Common myeloid progenitor, CD34-positive (primary cell): ENCODE measurements at regions of chr16 and their contacts with region 1.

Region 1: DNA sequence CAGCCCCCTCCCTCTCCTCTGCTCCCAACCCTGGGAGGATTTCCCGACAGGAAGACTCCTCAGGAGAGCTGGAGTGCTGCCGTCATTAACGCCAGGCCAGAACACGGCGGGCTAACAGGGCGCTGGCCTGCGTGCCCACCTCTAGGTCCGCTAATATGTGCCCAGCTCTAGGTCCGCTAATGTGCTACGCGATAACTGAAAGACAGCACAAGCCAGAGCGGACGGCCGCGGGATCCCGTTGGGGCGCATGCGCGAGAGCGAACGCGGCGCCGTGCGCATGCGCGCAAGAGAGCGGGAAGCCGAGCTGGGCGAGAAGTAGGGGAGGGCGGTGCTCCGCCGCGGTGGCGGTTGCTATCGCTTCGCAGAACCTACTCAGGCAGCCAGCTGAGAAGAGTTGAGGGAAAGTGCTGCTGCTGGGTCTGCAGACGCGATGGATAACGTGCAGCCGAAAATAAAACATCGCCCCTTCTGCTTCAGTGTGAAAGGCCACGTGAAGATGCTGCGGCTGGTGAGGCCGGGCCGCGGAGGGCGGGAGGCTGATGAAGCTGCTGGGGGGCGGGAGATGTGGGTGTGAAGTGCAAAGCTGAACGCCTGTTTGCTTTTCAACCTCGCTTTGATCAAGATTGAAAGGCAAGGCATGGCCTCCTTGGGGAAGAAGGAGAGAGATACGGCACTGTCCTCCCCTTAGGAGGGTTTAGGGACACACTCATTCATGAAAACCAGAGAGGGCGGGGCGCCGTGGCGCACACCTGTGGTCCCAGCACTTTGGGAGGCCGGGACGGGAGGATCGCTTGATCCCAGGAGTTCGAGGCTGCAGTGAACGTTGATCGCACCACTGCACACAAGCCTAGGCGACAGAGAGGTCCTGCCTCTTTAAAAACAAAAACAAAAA is at the start of gene CKLF:
- DNase-seq: peak; percentile 87 to 94 (median 93)
- H3K4me3 ChIP-seq: peak within 1 kb of the TSS; percentile 35 to 85 (median 71)
- H3K27ac ChIP-seq: peak within 1 kb of the TSS; percentile 36 to 88
- H3K4me1 ChIP-seq: peaks cover 26 to 72% (median 61%) of the 10 kb centered on the region in 4 experiments
- H3K27me3 ChIP-seq: no peaks in the 10 kb centered on the region

Region 2: GRCh38 chr16:66516808-66517585 is 35.5 kb before region 1 on chr16:
- CTCF ChIA-PET with region 1: interaction called, 168 read pairs
- POLR2A ChIA-PET with region 1: interaction called, 52 read pairs
- DNase-seq: peak; percentile 93 to 99 (median 99)
- H3K4me3 ChIP-seq: peak overlapping the region in 4 of 7 experiments; percentile 38 to 50 (median 41)
- H3K27ac ChIP-seq: peak overlapping the region; percentile 83 to 93
- H3K4me1 ChIP-seq: peaks cover 35 to 81% (median 68%) of the 10 kb centered on the region in 4 experiments
- H3K27me3 ChIP-seq: no peaks in the 10 kb centered on the region

Region 3: DNA sequence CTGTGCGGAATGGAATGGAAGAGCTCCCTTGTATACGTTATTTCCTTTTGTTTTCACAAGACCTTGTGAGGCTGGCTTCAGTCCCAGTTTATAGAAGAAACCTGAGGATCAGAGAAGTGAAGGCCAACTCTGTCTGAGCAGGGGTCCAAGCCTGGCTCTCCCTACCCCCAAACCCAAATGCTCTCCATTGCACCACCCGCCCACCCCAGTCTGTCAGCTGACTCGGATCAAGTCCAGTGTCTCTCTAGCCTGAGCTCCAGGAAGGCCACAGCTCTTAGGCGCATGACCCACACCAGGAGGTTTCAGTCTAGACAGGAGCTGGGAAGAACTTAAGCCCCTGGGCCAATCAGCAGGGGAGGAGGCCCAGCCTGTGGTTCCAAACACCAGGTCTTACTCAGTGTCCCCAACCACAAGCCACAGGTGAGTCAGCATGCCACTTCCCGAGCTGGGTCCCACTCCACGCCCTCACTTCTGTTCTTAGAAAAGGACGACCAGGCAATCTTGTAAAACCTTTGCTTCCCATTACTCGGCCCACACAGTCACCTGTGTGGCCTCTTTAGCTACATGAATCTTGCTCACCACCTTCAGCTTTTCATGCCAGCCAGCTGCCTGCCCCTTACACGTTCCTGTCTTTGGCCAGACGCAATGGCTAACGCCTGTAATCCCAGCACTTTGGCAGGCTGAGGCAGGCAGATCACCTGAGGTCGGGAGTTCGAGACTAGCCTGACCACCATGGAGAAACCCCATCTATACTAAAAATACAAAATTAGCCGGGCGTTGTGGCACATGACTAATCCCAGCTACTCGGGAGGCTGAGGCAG is 30.4 kb before region 1 on chr16:
- CTCF ChIA-PET with region 1: interaction called, 168 read pairs
- POLR2A ChIA-PET with region 1: interaction called, 52 read pairs
- DNase-seq: peak; percentile 87 to 96 (median 94)
- H3K4me3 ChIP-seq: peak overlapping the region in 4 of 7 experiments; percentile 2 to 41 (median 31)
- H3K27ac ChIP-seq: peak overlapping the region in 1 of 2 experiments; percentile 68
- H3K4me1 ChIP-seq: peaks cover 50 to 96% (median 93%) of the 10 kb centered on the region in 4 experiments
- H3K27me3 ChIP-seq: no peaks in the 10 kb centered on the region

Region 4: GRCh38 chr16:66539623-66540469 is 12.7 kb before region 1 on chr16:
- CTCF ChIA-PET with region 1: interaction called, 14 read pairs
- POLR2A ChIA-PET with region 1: interaction called, 3 read pairs
- DNase-seq: no peak
- H3K4me3 ChIP-seq: peak overlapping the region in 1 of 7 experiments; percentile 11
- H3K27ac ChIP-seq: no peak overlapping the region
- H3K4me1 ChIP-seq: peaks cover 5 to 20% (median 19%) of the 10 kb centered on the region in 4 experiments
- H3K27me3 ChIP-seq: no peaks in the 10 kb centered on the region

Region 5: DNA sequence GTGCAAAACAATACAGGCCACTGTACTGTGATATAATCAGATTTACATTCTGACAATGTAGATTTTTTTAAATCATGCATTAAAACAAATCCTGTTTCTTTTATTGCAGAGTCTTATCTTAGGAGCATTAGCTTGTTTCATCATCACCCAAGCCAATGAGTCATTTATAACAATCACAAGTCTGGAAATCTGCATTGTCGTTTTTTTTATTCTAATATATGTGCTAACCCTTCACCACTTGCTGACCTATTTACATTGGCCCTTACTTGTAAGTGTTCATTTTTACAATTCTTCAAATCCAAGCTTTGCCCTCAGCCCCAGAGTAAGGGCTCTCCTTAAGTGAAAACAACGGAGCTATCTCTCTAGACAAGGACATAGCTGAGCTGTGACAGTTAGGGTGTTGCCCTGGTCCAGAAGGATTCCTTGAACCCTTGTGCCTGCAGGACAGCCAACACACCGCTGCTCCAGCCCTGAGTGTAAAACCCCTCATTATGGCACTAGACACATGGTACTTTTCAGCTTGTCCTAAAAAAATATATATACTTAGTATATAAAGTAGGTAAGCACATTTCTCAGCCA is 17.4 kb after region 1 on chr16:
- CTCF ChIA-PET with region 1: interaction called, 47 read pairs
- POLR2A ChIA-PET with region 1: interaction called, 6 read pairs
- DNase-seq: no peak
- H3K4me3 ChIP-seq: no peak overlapping the region
- H3K27ac ChIP-seq: no peak overlapping the region
- H3K4me1 ChIP-seq: peaks cover 9 to 43% (median 25%) of the 10 kb centered on the region in 4 experiments
- H3K27me3 ChIP-seq: no peaks in the 10 kb centered on the region

Region 6: DNA sequence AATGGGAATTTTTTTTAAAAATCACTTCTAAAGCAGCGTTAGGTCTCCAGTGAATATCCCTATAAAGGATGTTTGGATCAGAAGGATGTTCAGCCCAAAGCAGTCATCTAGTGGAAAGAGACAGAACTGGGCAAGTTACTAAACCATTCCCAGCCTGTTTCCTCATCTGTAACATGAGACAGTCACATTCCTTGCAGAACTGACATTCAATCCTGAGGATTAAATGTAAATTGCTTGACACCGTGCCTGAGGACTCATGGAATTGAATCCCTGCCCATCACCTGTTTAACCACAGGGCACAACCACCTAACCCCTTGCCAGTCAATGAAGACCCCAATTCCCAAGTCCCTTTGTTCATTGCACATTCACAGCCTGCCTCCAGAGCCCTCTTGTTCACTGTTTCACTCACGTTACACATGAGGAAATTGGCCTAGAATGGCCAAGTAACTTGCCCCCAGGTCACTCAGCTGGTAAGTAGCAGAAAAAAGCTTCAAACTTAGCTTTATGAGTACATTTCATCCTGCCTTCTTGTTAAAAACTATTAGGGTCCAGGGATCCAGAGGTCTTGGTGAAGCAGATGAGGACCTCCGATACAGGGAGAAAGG is 28.2 kb after region 1 on chr16:
- CTCF ChIA-PET with region 1: interaction called, 13 read pairs
- POLR2A ChIA-PET with region 1: no interaction called
- DNase-seq: no peak
- H3K4me3 ChIP-seq: no peak overlapping the region
- H3K27ac ChIP-seq: no peak overlapping the region
- H3K4me1 ChIP-seq: peaks cover 8 to 36% (median 29%) of the 10 kb centered on the region in 4 experiments
- H3K27me3 ChIP-seq: peaks cover 0 to 1% (median 0%) of the 10 kb centered on the region in 5 experiments